ENCODE measurements at regions of chr17 and their contacts with region 1.

Region 1: GRCh38 chr17:4733073-4733531 is 1.9 kb downstream of the MED11 start:
- DNase-seq: peak in 12 of 42 donors; percentile 8 to 60 (median 30)

Region 2: GRCh38 chr17:4709794-4710692 is 23.1 kb before region 1 on chr17 and contains the start of gene ARRB2:
- intact Hi-C with region 1: loop called (anchors 1 kb)
- DNase-seq: peak; percentile 96 to 99 (median 99)

Region 3: DNA sequence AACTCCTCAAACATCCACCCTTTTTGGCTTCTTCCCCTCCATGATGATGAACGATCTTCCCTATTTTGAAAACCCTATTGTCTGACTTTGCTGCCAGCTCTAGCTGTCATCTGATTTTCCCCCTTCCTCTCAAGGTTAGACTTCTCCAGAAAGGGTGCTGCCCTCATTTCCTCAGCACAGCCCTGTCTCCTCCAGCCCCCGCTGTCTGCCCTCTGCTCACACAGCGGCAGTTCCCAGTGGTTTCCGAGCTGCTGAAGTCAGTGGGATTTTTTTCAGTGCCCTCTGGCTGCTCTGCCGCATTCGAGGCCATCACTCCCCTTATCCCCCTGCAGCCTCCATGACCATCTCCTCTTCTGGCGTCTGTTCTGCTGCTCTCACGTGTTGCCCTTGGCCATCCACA is 139.7 kb after region 1 on chr17:
- intact Hi-C with region 1: no loop called
- DNase-seq: peak in 32 of 42 donors; percentile 20 to 77 (median 52)

Region 4: DNA sequence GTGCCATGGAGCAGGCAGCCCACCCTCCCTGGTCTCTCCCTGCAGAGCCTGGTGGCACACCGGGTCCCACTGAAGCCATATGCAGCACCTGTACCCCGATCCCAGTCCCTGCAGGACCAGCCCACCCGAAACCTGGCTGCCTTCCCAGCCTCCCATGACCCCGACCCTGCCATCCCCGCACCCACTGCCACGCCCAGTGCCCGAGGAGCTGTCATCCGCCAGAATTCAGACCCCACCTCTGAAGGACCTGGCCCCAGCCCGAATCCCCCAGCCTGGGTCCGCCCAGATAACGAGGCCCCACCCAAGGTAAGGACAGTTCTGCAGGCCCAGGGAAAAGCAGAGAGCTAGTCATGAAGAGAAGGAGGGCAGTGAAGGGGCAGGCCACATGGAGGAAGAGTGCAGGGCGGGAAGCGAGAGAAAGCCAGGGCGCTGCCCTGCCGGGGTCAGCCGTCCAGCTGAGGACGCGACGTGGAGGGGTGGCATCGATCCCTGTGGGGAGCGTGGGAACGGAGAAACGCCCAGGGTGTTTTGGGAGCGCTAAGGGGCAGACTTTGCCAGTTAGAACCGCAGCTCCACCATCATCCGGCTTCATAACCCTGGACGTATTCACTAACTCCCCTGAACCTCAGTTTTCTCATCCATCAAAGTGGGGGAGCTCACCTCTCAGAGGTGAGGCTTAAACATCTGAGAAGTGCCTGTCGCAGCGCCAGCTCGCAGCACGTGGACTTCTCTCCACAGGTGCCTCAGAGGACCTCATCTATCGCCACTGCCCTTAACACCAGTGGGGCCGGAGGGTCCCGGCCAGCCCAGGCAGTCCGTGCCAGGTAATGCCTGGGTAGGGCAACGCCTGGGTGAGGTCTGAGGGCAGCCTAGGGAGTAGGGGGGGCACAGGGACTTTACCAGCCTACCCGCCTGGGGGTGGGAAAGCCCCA is 158.6 kb after region 1 on chr17:
- intact Hi-C with region 1: loop called (anchors 5 kb)
- DNase-seq: no peak

Measured in head of caudate nucleus (tissue), 42 donors.